ENCODE measurements at regions of chr2 and their contacts with region 1.

Region 1: GRCh38 chr2:191030521-191031154 is 16.7 kb upstream of the STAT1 start:
- DNase-seq: peak; percentile 16 to 65 (median 36)
- ATAC-seq: peak; percentile 95
- H3K4me3 ChIP-seq: no peak overlapping the region
- H3K27ac ChIP-seq: no peak overlapping the region
- H3K4me1 ChIP-seq: peaks cover 0 to 13% of the 10 kb centered on the region in 2 experiments; a peak in 3 of 5 replicates
- H3K27me3 ChIP-seq: no peaks in the 10 kb centered on the region
- CTCF ChIP-seq: peak; percentile 51 to 62 (median 59)
- EP300 ChIP-seq: no peak
- POLR2A ChIP-seq: no peak
- RAD21 ChIP-seq: peak; percentile 50 to 68

Region 2: DNA sequence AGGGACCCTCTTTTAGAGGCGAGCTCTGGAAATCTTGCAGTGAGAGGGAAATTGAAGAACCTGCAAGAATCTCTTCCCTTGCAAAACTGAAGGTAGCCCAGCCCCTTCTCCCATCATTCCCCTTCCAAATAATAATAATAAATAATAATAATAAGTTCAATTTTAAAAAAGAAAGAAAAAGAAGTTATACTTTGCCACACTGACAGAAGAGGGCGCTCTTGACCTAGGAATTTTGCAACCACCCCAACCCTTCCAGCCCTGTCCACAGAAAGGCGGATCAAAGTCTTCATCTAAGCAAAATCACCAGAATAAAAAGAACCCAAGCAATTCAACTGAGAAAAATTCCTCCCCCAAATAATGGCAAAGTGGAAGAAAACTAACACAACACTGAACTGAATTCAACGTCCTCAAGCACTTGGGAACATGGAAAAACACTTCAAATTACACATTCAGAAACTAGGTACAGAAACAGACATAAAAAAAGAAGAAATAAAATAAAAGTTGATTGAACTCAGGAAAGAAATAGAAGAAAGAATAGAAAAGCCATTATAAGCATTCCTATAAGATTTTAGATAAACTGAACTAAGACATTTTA is 248.9 kb before region 1 on chr2:
- CTCF ChIA-PET with region 1: interaction called, 4 read pairs
- POLR2A ChIA-PET with region 1: no interaction called
- in situ Hi-C with region 1: no loop called
- intact Hi-C with region 1: loop called (anchors 5 kb)
- DNase-seq: peak; percentile 52 to 63 (median 56)
- ATAC-seq: peak; percentile 87
- H3K4me3 ChIP-seq: no peak overlapping the region
- H3K27ac ChIP-seq: no peak overlapping the region
- H3K4me1 ChIP-seq: no peaks in the 10 kb centered on the region; a peak in 1 of 5 replicates
- H3K27me3 ChIP-seq: no peaks in the 10 kb centered on the region
- CTCF ChIP-seq: peak; percentile 34 to 71 (median 52); a peak in 5 of 6 replicates
- EP300 ChIP-seq: no peak
- POLR2A ChIP-seq: no peak
- RAD21 ChIP-seq: peak; percentile 64 to 79

Region 3: DNA sequence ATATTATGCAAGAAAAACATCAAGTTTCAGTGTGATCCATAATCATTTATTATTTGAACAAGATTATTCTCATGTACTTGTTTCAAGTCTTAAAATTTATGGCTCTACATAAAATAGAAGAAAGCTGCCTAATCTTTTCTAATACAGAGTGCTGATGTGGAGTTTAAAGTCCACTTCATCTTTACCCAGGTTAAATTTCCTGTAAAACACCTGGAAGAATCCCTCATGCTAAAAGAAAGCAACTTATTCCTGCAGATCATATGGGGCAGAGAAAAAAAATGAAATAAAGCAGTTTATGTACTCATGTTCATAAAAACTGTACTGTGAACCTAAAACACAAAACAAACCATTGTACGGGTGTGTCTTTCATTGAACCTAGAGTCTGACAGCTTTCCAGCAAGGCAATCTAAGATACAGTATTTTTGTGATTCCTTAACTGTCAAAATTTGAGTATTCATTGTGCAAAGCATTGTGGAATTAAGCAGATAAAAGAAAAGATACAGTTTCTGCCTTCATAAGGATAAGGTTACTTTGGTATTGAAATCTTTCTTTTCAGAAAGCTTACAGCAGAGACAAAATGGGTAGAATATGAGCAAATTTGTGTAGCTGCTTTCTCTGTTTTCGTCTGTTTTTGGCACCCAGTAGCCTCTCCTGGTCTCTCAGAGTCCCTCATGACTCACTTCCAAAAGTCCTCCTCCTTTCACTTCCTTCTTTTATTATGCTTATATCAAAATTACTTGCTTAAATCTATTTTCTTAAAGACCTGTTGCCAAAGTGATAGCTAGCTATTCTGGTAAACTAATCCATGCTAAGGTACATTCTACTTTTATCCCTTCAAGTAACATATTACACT is 176.9 kb before region 1 on chr2:
- CTCF ChIA-PET with region 1: no interaction called
- POLR2A ChIA-PET with region 1: no interaction called
- in situ Hi-C with region 1: no loop called
- intact Hi-C with region 1: loop called (anchors 5 kb)
- DNase-seq: no peak
- ATAC-seq: no peak
- H3K4me3 ChIP-seq: no peak overlapping the region
- H3K27ac ChIP-seq: no peak overlapping the region
- H3K4me1 ChIP-seq: no peaks in the 10 kb centered on the region
- H3K27me3 ChIP-seq: no peaks in the 10 kb centered on the region
- CTCF ChIP-seq: no peak
- EP300 ChIP-seq: no peak
- POLR2A ChIP-seq: no peak
- RAD21 ChIP-seq: no peak

Region 4: DNA sequence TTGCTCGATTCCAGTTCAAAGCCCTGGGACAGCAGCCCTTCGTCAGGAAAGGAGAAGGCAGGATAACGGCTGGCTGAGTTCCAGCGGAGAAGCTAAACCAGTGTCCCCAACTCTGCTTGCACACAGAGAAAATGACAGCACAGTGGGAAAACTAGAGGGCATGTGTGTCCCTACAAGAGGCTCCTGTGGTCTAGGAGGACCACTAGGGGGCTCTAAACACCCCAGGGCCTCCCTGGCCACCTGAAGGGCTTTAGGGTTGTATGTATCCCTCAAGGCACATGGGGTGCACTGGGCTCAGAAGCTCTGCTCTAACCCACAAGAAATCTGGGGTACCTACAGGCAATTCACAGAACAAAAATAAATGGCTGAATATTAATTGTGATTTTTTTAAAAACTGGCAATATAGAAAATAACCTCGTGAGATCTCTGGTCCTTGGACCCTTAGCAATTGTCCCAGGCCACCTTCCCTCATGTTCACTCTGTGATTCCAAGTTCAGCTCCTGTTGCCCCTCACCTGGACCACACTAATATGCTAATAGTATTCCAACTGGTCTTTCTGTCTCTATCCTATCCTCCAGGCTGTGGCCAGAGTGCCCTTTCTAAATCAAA is 34.2 kb before region 1 on chr2:
- CTCF ChIA-PET with region 1: no interaction called
- POLR2A ChIA-PET with region 1: interaction called, 3 read pairs
- in situ Hi-C with region 1: no loop called
- intact Hi-C with region 1: loop called (anchors 1 kb)
- DNase-seq: peak; percentile 31 to 67 (median 54)
- ATAC-seq: peak; percentile 99
- H3K4me3 ChIP-seq: no peak overlapping the region
- H3K27ac ChIP-seq: no peak overlapping the region
- H3K4me1 ChIP-seq: no peaks in the 10 kb centered on the region
- H3K27me3 ChIP-seq: no peaks in the 10 kb centered on the region
- CTCF ChIP-seq: peak; percentile 73 to 97 (median 82)
- EP300 ChIP-seq: no peak
- POLR2A ChIP-seq: no peak
- RAD21 ChIP-seq: peak; percentile 22 to 62; a peak in 2 of 4 replicates

Region 5: GRCh38 chr2:191846515-191847476 is 816.2 kb after region 1 on chr2 and contains the start of gene CAVIN2:
- CTCF ChIA-PET with region 1: no interaction called
- POLR2A ChIA-PET with region 1: no interaction called
- in situ Hi-C with region 1: loop called (anchors 10 kb)
- intact Hi-C with region 1: no loop called
- DNase-seq: peak; percentile 14 to 70 (median 32)
- ATAC-seq: peak; percentile 57
- H3K4me3 ChIP-seq: peak within 1 kb of the TSS; percentile 65
- H3K27ac ChIP-seq: peak within 1 kb of the TSS; percentile 95
- H3K4me1 ChIP-seq: peaks cover 6 to 29% of the 10 kb centered on the region in 2 experiments; a peak in 4 of 5 replicates
- H3K27me3 ChIP-seq: no peaks in the 10 kb centered on the region
- CTCF ChIP-seq: no peak; a peak in 1 of 6 replicates
- EP300 ChIP-seq: no peak
- POLR2A ChIP-seq: 0 out of 2 replicates have a peak, but pooled peaks have one; percentile 46
- RAD21 ChIP-seq: no peak; a peak in 1 of 4 replicates
- polyA plus RNA-seq, gene CAVIN2: 20.6 to 31.5 TPM

Measured in K562 (cell line).